T-cell (primary cell): ENCODE measurements at regions of chr9 and their contacts with region 1.

Region 1: DNA sequence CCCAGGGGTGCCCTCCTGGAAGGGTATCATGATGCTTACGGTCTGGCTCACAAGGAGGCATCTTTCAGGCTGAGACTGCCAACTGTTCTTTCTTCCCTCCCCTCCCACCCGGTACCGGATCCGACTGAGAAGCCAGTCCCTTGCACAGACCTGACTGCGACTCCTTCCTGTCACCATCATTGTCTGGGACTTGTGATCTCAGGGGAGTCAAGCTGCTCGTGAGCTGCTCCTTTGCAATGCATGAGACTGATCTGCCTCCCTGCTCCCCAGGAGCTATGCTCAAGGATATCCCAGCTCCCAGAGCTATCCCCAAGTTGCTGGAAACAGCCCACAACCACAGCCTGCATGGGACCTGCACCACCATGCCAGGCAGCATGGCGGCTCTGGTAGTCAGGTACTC is 170.9 kb downstream of the GADD45G start:
- DNase-seq: no peak
- ATAC-seq: no peak
- H3K4me3 ChIP-seq: no peak overlapping the region
- H3K4me3 Mint-ChIP-seq: no peak overlapping the region
- H3K27ac ChIP-seq: no peak overlapping the region
- H3K27ac Mint-ChIP-seq: no peak overlapping the region
- H3K4me1 ChIP-seq: no peaks in the 10 kb centered on the region
- H3K4me1 Mint-ChIP-seq: peaks cover 0 to 8% (median 6%) of the 10 kb centered on the region in 3 donors
- H3K27me3 ChIP-seq: peaks cover 0 to 17% of the 10 kb centered on the region in 2 experiments
- H3K27me3 Mint-ChIP-seq: peaks cover 0 to 4% of the 10 kb centered on the region in 2 donors

Region 2: GRCh38 chr9:89759572-89759971 is 16.1 kb before region 1 on chr9:
- CTCF ChIA-PET with region 1: no interaction called
- POLR2A ChIA-PET with region 1: interaction called in 1 of 2 experiments, 11 read pairs
- DNase-seq: no peak
- ATAC-seq: no peak
- H3K4me3 ChIP-seq: no peak overlapping the region
- H3K4me3 Mint-ChIP-seq: no peak overlapping the region
- H3K27ac ChIP-seq: no peak overlapping the region
- H3K27ac Mint-ChIP-seq: no peak overlapping the region
- H3K4me1 ChIP-seq: peaks cover 0 to 3% of the 10 kb centered on the region in 2 experiments
- H3K4me1 Mint-ChIP-seq: peaks cover 0 to 10% (median 0%) of the 10 kb centered on the region in 3 donors
- H3K27me3 ChIP-seq: peaks cover 0 to 5% of the 10 kb centered on the region in 2 experiments
- H3K27me3 Mint-ChIP-seq: no peaks in the 10 kb centered on the region

Region 3: DNA sequence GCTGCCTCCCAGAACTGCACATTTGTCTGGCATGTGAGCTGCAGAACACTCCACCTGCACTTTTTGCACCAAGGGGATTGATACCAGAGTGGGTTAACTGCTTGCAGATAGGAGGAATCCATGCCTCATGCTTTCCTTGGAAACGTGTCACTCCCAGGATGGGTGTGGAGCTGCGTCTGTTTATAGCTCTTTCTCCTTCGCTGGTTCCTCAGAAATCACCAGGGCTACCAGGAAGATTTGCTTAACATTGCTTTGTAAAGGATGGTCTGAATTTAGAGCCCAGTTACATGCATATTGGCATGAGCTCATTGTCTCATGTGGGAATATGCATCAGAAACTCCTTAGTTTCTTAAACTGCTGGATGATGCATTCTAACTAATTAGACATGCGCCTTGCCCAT is 63.8 kb after region 1 on chr9:
- CTCF ChIA-PET with region 1: no interaction called
- POLR2A ChIA-PET with region 1: no interaction called
- DNase-seq: no peak
- ATAC-seq: no peak
- H3K4me3 ChIP-seq: no peak overlapping the region
- H3K4me3 Mint-ChIP-seq: no peak overlapping the region
- H3K27ac ChIP-seq: no peak overlapping the region
- H3K27ac Mint-ChIP-seq: no peak overlapping the region
- H3K4me1 ChIP-seq: no peaks in the 10 kb centered on the region
- H3K4me1 Mint-ChIP-seq: no peaks in the 10 kb centered on the region
- H3K27me3 ChIP-seq: peaks cover 0 to 7% of the 10 kb centered on the region in 2 experiments
- H3K27me3 Mint-ChIP-seq: no peaks in the 10 kb centered on the region